GM12878 (cell line): ENCODE measurements at regions of chr2 and their contacts with region 1.

Region 1: GRCh38 chr2:157468931-157469708 is 25.2 kb upstream of the CYTIP start:
- DNase-seq: peak; percentile 95
- ATAC-seq: peak; percentile 78
- H3K4me3 ChIP-seq: peak overlapping the region; percentile 46; the same call in 1 of the 2 replicates
- H3K27ac ChIP-seq: peak overlapping the region; percentile 98
- H3K4me1 ChIP-seq: peaks cover 38% of the 10 kb centered on the region
- H3K27me3 ChIP-seq: no peaks in the 10 kb centered on the region
- CTCF ChIP-seq: no peak
- EP300 ChIP-seq: peak; percentile 100
- POLR2A ChIP-seq: no peak
- RAD21 ChIP-seq: peak; percentile 22; the same call in 1 of the 2 replicates

Region 2: DNA sequence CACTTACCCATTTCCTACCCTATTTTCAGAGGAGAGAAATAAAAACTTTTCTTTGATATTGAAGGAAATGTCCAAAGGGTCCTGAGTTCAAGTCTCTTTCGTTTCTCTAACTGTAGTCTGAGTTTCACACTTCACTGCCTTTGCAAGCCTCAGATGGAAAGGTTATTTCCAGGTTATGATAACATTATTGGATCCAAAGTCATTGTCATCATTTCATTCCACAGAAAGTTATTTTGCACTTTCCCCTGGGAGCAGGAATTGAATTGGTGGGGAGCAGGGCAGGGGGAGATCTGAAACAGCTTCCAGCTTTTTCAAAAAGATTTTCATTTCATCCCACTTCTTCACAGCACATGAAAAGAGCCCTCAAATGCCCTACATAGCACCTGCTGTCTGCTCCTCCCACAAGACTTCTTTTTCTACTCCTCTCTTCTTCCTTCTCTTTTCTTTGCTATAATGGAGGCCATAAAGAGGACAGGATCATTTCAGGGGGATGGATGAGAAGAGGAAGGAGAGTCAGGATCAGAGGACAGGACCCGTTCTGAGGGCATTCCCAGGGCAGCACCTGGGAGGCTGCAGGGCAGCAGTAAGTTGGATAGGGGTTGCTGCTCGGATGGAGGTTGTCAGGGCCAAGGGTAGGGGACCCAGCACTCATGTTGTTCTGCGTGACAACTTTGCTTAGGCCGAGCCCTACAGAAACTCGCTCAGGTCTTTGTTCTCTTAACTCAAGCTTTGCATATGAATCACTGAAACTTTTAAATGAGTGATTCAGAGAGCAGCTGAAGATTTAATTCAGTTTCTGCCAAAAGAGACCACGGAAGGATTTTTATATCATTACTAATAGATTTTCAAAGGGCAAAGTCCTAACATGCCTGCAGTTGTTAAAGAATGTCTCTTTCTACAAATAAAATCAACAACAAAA is 223.0 kb before region 1 on chr2:
- CTCF ChIA-PET with region 1: no interaction called
- POLR2A ChIA-PET with region 1: no interaction called
- RAD21 ChIA-PET with region 1: no interaction called
- SMC1A ChIA-PET with region 1: no interaction called
- in situ Hi-C with region 1: no loop called
- intact Hi-C with region 1: loop called (anchors 5 kb)
- DNase-seq: peak; percentile 31
- ATAC-seq: peak; percentile 98
- H3K4me3 ChIP-seq: no peak overlapping the region
- H3K27ac ChIP-seq: peak overlapping the region; percentile 54
- H3K4me1 ChIP-seq: peaks cover 14% of the 10 kb centered on the region
- H3K27me3 ChIP-seq: no peaks in the 10 kb centered on the region
- CTCF ChIP-seq: no peak
- EP300 ChIP-seq: peak; percentile 80 to 83
- POLR2A ChIP-seq: no peak
- RAD21 ChIP-seq: no peak

Region 3: DNA sequence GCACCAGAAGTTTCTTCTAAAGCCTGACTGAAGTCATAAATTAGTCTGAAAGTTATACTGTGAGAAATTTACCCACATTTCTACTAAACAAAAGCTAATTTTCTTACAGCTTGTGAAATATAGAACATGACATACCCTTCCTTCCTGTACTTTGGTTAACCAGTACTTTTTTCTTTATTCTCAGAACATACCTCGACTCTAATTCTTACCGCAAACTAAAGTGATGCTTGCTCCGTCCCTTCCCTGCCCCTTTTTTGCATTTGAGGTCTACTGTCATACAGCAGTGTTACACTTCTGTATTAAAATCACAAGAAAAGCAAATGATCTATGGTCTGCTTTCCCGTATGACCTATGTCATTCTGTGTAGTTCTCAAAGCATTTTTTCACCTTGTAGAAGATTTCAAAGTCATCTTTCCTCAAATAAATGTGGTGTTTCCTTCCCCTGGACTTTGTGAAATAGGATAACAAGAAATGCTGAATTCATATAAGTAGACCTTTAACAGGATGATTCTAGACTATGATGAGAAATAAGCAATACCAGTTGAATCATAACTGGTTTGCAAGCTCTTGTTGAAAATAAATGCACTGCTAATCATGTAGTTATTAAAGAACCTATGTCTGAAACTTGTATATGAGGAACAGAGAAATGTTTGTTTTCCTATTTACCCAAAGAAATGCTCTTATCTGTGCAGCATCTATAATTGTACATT is 55.6 kb before region 1 on chr2:
- CTCF ChIA-PET with region 1: interaction called, 6 read pairs
- POLR2A ChIA-PET with region 1: interaction called, 5 read pairs
- RAD21 ChIA-PET with region 1: interaction called, 44 read pairs
- SMC1A ChIA-PET with region 1: interaction called, 17 read pairs
- in situ Hi-C with region 1: no loop called
- intact Hi-C with region 1: loop called (anchors 1 kb)
- DNase-seq: peak; percentile 97
- ATAC-seq: peak; percentile 87
- H3K4me3 ChIP-seq: no peak overlapping the region
- H3K27ac ChIP-seq: peak overlapping the region; percentile 86
- H3K4me1 ChIP-seq: peaks cover 38% of the 10 kb centered on the region
- H3K27me3 ChIP-seq: no peaks in the 10 kb centered on the region
- CTCF ChIP-seq: no peak
- EP300 ChIP-seq: peak; percentile 71 to 74; a peak in 2 of 4 replicates
- POLR2A ChIP-seq: peak; percentile 18; the same call in 1 of the 2 replicates
- RAD21 ChIP-seq: peak; percentile 37

Region 4: DNA sequence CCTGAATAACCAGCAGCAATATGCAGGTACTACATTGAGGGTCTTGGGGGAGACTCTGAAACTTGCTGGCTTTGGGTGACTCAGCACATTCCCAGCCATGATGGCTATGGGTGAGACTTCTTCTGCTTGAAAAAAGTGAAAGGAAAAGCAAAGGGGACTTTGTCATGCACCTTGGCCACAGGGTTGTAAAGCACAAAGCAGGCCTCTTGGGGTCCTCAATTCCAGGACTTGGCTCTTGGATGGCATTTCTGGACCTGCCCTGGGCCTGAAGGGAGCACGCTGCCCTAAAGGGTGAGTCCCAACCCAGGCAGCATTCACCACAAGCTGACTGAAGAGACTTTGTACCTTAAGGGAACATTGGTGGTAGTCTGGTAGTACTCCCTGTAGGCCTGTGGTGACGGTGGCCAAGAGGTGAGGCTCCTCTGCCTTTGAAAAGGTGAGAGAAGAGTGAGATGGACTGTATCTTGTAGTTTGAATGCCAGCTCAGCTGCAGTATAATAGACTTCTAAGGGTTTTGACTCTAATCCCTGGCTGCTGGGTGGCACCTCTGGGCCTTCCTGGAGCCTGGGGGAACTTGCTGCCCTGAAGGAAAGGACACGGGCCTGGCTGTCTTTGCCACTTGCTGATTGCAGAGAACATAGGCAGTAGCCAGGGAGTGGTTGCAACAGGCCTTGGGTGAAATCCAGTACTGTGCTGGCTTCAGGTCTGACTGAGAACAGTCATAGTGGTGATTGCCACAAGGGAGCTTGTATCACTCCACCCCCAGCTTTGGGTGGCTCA is 11.3 kb after region 1 on chr2:
- CTCF ChIA-PET with region 1: interaction called, 15 read pairs
- POLR2A ChIA-PET with region 1: interaction called, 52 read pairs
- RAD21 ChIA-PET with region 1: interaction called, 22 read pairs
- SMC1A ChIA-PET with region 1: interaction called, 87 read pairs
- in situ Hi-C with region 1: no loop called
- intact Hi-C with region 1: no loop called
- DNase-seq: no peak
- ATAC-seq: peak; percentile 87
- H3K4me3 ChIP-seq: no peak overlapping the region
- H3K27ac ChIP-seq: peak overlapping the region; percentile 44
- H3K4me1 ChIP-seq: peaks cover 25% of the 10 kb centered on the region
- H3K27me3 ChIP-seq: no peaks in the 10 kb centered on the region
- CTCF ChIP-seq: no peak
- EP300 ChIP-seq: peak in 1 of 2 experiments; percentile 26; a peak in 1 of 4 replicates
- POLR2A ChIP-seq: peak; percentile 35; the same call in 1 of the 2 replicates
- RAD21 ChIP-seq: no peak

Region 5: DNA sequence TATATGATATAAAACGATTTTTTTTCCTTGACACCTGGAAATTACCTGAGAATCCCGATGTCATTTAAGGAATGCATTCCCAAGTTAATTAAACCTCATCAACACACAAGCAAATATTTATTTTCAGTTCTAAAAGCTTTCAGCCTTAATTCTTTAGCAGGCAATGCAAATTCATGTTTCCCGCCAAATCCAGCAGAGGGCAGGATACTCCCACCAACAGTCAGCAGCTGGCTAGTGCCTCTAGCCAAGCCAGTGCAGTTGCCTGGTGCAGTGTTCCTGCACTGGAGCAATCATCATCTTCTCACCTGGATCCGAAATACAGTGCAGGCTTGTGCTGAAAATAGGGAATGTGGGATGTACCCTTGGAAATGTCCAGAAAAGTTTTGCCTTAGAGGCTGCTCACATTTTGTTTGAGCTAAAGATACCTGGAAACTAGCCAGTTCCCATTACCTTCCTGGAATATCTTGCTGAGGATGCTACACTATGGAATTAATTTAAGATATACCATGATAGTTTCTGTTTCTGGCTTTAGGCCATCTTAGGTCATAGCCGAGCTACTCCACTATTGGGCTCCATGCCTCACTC is 23.2 kb after region 1 on chr2:
- CTCF ChIA-PET with region 1: interaction called, 13 read pairs
- POLR2A ChIA-PET with region 1: interaction called, 4 read pairs
- RAD21 ChIA-PET with region 1: interaction called, 8 read pairs
- SMC1A ChIA-PET with region 1: interaction called, 16 read pairs
- in situ Hi-C with region 1: no loop called
- intact Hi-C with region 1: no loop called
- DNase-seq: peak; percentile 43
- ATAC-seq: peak; percentile 98
- H3K4me3 ChIP-seq: no peak overlapping the region
- H3K27ac ChIP-seq: no peak overlapping the region
- H3K4me1 ChIP-seq: no peaks in the 10 kb centered on the region
- H3K27me3 ChIP-seq: no peaks in the 10 kb centered on the region
- CTCF ChIP-seq: peak; percentile 79 to 93 (median 82); a peak in 5 of 6 replicates
- EP300 ChIP-seq: no peak
- POLR2A ChIP-seq: no peak
- RAD21 ChIP-seq: peak; percentile 89

Region 6: GRCh38 chr2:157587576-157587975 is 118.5 kb after region 1 on chr2:
- CTCF ChIA-PET with region 1: no interaction called
- POLR2A ChIA-PET with region 1: no interaction called
- RAD21 ChIA-PET with region 1: no interaction called
- SMC1A ChIA-PET with region 1: no interaction called
- in situ Hi-C with region 1: no loop called
- intact Hi-C with region 1: no loop called
- DNase-seq: no peak
- ATAC-seq: no peak
- H3K4me3 ChIP-seq: no peak overlapping the region
- H3K27ac ChIP-seq: no peak overlapping the region
- H3K4me1 ChIP-seq: no peaks in the 10 kb centered on the region
- H3K27me3 ChIP-seq: no peaks in the 10 kb centered on the region; a peak in 1 of 4 replicates
- CTCF ChIP-seq: no peak
- EP300 ChIP-seq: no peak
- POLR2A ChIP-seq: no peak
- RAD21 ChIP-seq: no peak

Region 7: GRCh38 chr2:157684940-157685466 is 215.9 kb after region 1 on chr2:
- CTCF ChIA-PET with region 1: no interaction called
- POLR2A ChIA-PET with region 1: no interaction called
- RAD21 ChIA-PET with region 1: no interaction called
- SMC1A ChIA-PET with region 1: no interaction called
- in situ Hi-C with region 1: no loop called
- intact Hi-C with region 1: no loop called
- DNase-seq: no peak
- ATAC-seq: no peak
- H3K4me3 ChIP-seq: no peak overlapping the region
- H3K27ac ChIP-seq: no peak overlapping the region
- H3K4me1 ChIP-seq: no peaks in the 10 kb centered on the region
- H3K27me3 ChIP-seq: no peaks in the 10 kb centered on the region
- CTCF ChIP-seq: no peak
- EP300 ChIP-seq: no peak
- POLR2A ChIP-seq: no peak
- RAD21 ChIP-seq: no peak